ENCODE measurements at regions of chr1 and their contacts with region 1.

Region 1: GRCh38 chr1:27603681-27604578 is at the start of gene AHDC1:
- DNase-seq: peak; percentile 72 to 92 (median 89)
- H3K4me3 ChIP-seq: peak within 1 kb of the TSS; percentile 55 to 98 (median 90)
- H3K27ac ChIP-seq: peak within 1 kb of the TSS in 58 of 59 donors; percentile 17 to 97 (median 91)
- H3K27me3 ChIP-seq: no peaks in the 10 kb centered on the region
- CTCF ChIP-seq: peak in 25 of 56 donors; percentile 10 to 58 (median 26)
- total RNA-seq, gene AHDC1: 57.6 to 160 (median 87.2) TPM

Region 2: GRCh38 chr1:27102707-27103491 is 501.0 kb before region 1 on chr1:
- intact Hi-C with region 1: loop called in 1 of 2 experiments (anchors 5 kb)
- DNase-seq: peak; percentile 75 to 92 (median 87)
- H3K4me3 ChIP-seq: peak overlapping the region in 3 of 59 donors; percentile 0 to 44 (median 3)
- H3K27ac ChIP-seq: peak overlapping the region in 25 of 59 donors; percentile 7 to 67 (median 49)
- H3K27me3 ChIP-seq: no peaks in the 10 kb centered on the region
- CTCF ChIP-seq: peak in 55 of 56 donors; percentile 77 to 100 (median 98)

Region 3: GRCh38 chr1:27321813-27322577 is 281.9 kb before region 1 on chr1 and contains the start of gene TMEM222:
- intact Hi-C with region 1: loop called (anchors 1 to 10 kb)
- DNase-seq: peak; percentile 94 to 100 (median 98)
- H3K4me3 ChIP-seq: peak within 1 kb of the TSS; percentile 63 to 100 (median 94)
- H3K27ac ChIP-seq: peak within 1 kb of the TSS in 58 of 59 donors; percentile 23 to 97 (median 86)
- H3K27me3 ChIP-seq: no peaks in the 10 kb centered on the region
- CTCF ChIP-seq: peak in 50 of 56 donors; percentile 20 to 75 (median 44)
- total RNA-seq, gene TMEM222: 37.6 to 69.9 (median 51.8) TPM

Region 4: GRCh38 chr1:27416387-27417111 is 187.4 kb before region 1 on chr1:
- intact Hi-C with region 1: loop called in 1 of 2 experiments (anchors 5 kb)
- DNase-seq: peak in 1 of 10 donors; percentile 55
- H3K4me3 ChIP-seq: no peak overlapping the region
- H3K27ac ChIP-seq: peak overlapping the region in 45 of 59 donors; percentile 7 to 97 (median 89)
- H3K27me3 ChIP-seq: no peaks in the 10 kb centered on the region
- CTCF ChIP-seq: peak in 54 of 56 donors; percentile 33 to 79 (median 65)

Region 5: GRCh38 chr1:27525296-27526272 is 78.3 kb before region 1 on chr1:
- intact Hi-C with region 1: loop called in 1 of 2 experiments (anchors 10 kb)
- DNase-seq: peak in 1 of 10 donors; percentile 49
- H3K4me3 ChIP-seq: peak overlapping the region in 57 of 59 donors; percentile 4 to 72 (median 39)
- H3K27ac ChIP-seq: peak overlapping the region in 58 of 59 donors; percentile 33 to 97 (median 88)
- H3K27me3 ChIP-seq: no peaks in the 10 kb centered on the region
- CTCF ChIP-seq: no peak

Region 6: GRCh38 chr1:27574871-27575831 is 28.8 kb before region 1 on chr1:
- intact Hi-C with region 1: loop called in 1 of 2 experiments (anchors 2 kb)
- DNase-seq: peak in 6 of 10 donors; percentile 37 to 69 (median 47)
- H3K4me3 ChIP-seq: peak overlapping the region; percentile 40 to 75 (median 59)
- H3K27ac ChIP-seq: peak overlapping the region in 57 of 59 donors; percentile 8 to 95 (median 82)
- H3K27me3 ChIP-seq: no peaks in the 10 kb centered on the region
- CTCF ChIP-seq: peak in 31 of 56 donors; percentile 6 to 52 (median 28)

Measured in dorsolateral prefrontal cortex (tissue), 120 donors.